Activated T-helper 1 cell treated with anti-CD3 and anti-CD28 coated beads, Interleukin-12 subunit alpha, Interleukin-12 subunit beta, Interleukin-2, Interleukin-4 antibody, amounts not matched to agents 30 ng/mL and 10 ng/mL and 1 ng/mL, durations not matched to agents 14 hours and 24 hours and 36 hours (primary cell): ENCODE measurements at regions of chr17 and their contacts with region 1.

Region 1: DNA sequence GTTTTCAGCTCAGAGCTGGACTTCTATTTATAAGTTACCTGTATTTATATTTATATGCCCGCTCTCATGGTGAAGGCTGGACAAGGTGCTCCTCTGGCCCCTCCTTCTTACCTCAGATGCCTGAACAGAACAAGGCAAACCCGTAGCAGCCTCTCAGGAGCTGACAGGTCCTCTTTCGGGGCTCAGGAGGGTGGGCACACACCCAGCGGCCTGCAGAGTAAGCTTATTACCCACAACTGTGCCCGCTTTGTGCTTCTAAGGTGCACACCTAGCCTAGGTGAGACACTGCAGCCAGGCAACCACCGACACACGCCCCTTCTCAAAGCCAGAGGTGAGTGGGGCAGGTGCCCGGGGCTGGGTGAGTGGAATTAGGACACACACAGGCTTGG is 5.3 kb downstream of the NKIRAS2 start:
- DNase-seq: no peak
- H3K4me3 Mint-ChIP-seq: no peak overlapping the region
- H3K27ac Mint-ChIP-seq: peak overlapping the region; percentile 71
- H3K4me1 Mint-ChIP-seq: peaks cover 20% of the 10 kb centered on the region
- H3K27me3 Mint-ChIP-seq: no peaks in the 10 kb centered on the region

Region 2: DNA sequence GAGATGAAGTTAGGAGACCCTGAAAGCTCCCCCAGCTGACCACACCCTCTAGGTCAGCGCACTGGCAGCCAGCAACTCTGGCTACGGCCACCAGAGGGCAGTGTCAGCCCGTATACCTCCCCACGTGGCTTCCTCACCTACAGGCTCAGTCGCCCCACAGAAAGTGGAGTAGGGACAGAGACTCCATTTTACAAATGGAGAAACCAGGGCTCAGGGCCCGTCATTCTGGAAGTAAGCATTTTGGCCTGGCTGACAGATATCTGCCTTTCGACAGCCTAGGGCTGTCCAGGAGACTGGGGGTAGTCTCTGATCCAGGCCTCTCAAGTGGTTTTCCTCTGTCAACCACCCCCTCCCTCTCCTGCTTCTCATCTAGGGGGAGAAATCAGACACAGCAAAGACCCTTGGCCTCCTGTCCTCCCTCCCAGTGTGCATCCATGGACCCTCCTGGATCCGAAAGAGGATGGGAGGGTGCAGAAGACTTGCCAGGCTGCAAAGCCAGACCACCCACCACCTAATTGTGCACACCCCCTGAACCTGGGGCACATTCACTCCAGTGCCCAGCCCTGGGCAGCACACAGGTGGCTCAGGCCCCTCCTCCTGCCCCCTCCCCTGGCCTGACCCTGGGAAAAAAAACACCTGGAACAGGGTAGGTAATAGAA is 287.0 kb before region 1 on chr17:
- intact Hi-C with region 1: loop called (anchors 1 kb)
- DNase-seq: peak; percentile 76
- H3K4me3 Mint-ChIP-seq: no peak overlapping the region
- H3K27ac Mint-ChIP-seq: no peak overlapping the region
- H3K4me1 Mint-ChIP-seq: peaks cover 5% of the 10 kb centered on the region
- H3K27me3 Mint-ChIP-seq: peaks cover 34% of the 10 kb centered on the region

Region 3: GRCh38 chr17:41801374-41802271 is 223.6 kb before region 1 on chr17:
- intact Hi-C with region 1: no loop called
- DNase-seq: peak; percentile 50
- H3K4me3 Mint-ChIP-seq: no peak overlapping the region
- H3K27ac Mint-ChIP-seq: no peak overlapping the region
- H3K4me1 Mint-ChIP-seq: no peaks in the 10 kb centered on the region
- H3K27me3 Mint-ChIP-seq: peaks cover 1% of the 10 kb centered on the region

Region 4: DNA sequence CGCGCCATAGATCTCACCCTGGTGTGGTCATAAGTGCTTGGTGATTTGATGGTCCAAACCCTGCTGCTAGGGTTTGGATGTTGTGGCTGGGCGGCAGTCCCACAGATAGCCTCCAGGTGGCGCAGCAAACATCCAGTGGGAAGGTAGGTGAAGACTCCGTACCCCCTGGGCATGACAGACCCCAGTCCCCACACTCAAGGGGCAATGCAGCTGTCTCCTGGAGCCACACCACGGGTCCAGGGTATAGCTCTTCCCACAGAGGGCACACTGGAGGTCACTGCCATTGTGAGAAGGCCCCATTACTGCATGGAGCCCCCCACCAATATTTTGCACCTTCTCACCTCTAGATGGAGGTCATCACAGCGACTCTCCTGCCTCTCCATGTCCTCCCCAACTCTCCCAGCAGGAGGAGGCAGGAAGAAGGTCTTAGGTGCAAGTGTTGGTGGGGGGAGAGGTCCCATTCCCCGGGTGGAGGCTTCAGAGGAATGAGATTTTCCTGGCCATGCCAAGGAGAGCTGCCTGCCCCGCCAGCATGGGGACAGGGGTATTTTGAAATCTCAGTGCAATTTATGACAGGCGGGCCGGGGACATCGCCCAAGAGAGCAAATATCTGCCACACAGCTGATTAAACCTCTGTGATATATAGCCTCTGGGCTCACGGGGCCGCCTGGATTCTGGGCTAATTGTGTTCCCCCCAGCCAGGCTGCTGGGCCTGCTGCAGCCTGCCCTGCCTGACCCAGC is 42.3 kb after region 1 on chr17:
- intact Hi-C with region 1: loop called (anchors 1 kb)
- DNase-seq: peak; percentile 53
- H3K4me3 Mint-ChIP-seq: no peak overlapping the region
- H3K27ac Mint-ChIP-seq: no peak overlapping the region
- H3K4me1 Mint-ChIP-seq: peaks cover 33% of the 10 kb centered on the region
- H3K27me3 Mint-ChIP-seq: peaks cover 13% of the 10 kb centered on the region

Region 5: DNA sequence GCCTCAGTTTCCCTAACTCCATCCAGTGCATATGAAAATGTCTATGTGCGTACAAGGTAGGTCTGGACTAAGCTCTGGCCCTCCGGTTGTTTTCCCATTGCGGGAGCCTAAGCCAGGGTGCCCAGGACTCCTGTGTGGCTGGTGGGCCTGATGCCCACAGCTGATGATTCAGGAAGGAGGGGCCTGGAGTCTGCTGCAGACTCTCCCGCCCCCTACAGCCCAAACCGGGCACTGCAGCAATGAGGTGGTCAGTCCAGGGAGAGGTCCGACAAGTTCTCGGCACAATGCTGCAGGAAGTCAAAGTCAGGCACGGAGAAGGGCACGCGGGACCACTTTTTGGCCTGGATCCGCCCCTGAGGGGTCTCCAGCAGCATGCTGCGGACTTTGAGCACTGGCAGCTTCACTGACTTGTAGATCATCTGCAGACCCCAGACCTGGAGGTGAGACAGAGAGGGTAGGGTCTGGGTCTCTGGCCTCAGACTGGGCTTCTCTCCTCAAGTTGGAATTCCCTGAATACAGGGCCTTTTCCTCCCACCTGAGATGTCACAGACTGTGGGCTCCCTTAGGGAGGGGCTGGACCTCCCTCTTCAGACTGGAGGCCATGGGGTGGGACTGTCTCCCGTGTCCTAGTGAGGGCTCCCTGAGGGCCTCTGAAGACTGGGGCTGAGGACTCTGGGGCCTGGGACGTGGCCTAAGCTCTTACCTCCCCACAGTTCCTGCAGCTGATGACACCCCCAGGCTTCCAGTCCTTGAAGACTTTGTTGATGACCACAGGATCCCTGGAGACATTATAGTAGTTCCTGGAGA is 76.5 kb after region 1 on chr17:
- intact Hi-C with region 1: loop called (anchors 1 kb)
- DNase-seq: peak; percentile 50
- H3K4me3 Mint-ChIP-seq: no peak overlapping the region
- H3K27ac Mint-ChIP-seq: no peak overlapping the region
- H3K4me1 Mint-ChIP-seq: peaks cover 7% of the 10 kb centered on the region
- H3K27me3 Mint-ChIP-seq: peaks cover 16% of the 10 kb centered on the region

Region 6: GRCh38 chr17:42112552-42113176 is 87.5 kb after region 1 on chr17 and contains the start of gene DHX58:
- intact Hi-C with region 1: loop called (anchors 1 kb)
- DNase-seq: peak; percentile 83
- H3K4me3 Mint-ChIP-seq: peak within 1 kb of the TSS; percentile 85
- H3K27ac Mint-ChIP-seq: peak within 1 kb of the TSS; percentile 86
- H3K4me1 Mint-ChIP-seq: peaks cover 50% of the 10 kb centered on the region
- H3K27me3 Mint-ChIP-seq: no peaks in the 10 kb centered on the region
- total RNA-seq, gene DHX58: 26.9 and 28.4 TPM in 2 replicates

Region 7: DNA sequence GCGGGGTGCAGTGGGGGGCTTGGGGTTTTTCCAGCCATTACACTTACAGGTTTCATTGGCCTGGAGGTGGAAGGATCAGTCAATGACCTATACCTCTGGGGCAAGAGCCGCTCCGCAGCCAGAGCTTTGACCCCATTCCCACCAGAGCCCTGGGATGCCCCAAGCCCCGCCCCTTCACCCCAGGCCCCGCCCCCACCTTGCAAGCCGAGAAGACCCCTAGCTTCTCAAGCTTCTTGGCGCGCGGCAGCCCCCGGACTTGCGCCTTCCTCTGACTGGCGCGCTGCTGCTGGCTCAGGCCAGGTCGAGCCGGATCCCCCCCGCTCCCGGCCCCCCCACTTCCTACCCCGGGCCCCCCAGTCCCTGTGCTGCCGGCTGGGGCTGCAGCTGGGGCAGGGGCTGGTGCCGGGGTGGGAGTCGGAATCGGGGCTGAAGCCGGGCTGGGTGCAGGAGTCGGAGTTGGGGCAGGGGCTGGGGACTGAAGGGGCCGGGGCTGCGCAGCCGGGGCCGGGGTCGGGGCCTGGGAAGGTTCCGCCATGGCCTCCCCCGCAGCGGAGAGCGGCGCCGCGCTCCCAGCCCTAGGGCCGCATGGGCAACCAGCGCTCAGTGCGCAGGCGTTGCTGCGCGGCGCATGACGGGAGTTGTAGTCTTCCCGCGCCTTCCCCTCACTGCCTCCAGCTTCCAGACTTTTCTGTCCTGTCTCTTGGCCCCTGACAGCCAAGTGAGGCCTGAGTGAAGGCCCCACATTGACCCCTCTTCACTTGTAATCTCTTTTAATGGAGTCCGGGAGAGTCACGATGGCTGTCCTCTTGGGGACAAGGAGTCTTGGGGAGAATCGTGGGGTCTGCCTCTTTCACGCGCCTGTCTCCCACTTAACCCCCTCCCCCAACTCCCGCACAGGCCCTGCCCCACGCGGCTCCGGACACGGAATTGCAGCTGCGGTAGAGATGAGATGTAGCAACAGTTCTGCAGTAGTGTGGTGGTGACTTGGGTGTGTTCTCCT is 95.9 kb after region 1 on chr17 and contains the start of gene KAT2A:
- intact Hi-C with region 1: loop called (anchors 1 kb)
- DNase-seq: peak; percentile 68
- H3K4me3 Mint-ChIP-seq: peak within 1 kb of the TSS; percentile 81
- H3K27ac Mint-ChIP-seq: peak within 1 kb of the TSS; percentile 86
- H3K4me1 Mint-ChIP-seq: peaks cover 36% of the 10 kb centered on the region
- H3K27me3 Mint-ChIP-seq: no peaks in the 10 kb centered on the region
- total RNA-seq, gene KAT2A: 70.8 and 76.9 TPM in 2 replicates